ENCODE measurements at regions of chr15 and their contacts with region 1.

Region 1: DNA sequence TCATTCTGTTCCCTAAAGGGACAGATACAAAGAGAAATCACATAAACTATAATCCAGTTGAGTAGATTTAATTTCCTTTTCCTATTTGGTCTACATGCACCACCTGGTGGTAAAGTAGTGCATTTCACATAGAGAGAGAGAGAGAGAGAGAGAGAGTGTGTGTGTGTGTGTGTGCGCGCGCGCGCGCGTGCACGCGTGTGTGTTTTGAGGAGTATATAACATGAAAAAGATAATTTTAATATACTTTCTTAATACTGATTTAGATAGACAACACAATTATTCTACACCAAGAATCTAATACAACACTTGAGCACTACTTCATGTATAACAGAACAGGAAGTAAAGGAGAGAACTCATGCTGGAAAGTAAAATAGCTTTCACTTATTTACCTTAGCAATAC is 1.1 kb upstream of the FGF7 start:
- DNase-seq: peak; percentile 36 to 56 (median 50)
- H3K4me3 ChIP-seq: no peak overlapping the region
- H3K4me3 Mint-ChIP-seq: peak overlapping the region in 6 of 8 donors; percentile 3 to 69 (median 61)
- H3K27ac ChIP-seq: no peak overlapping the region
- H3K27ac Mint-ChIP-seq: peak overlapping the region in 3 of 7 donors; percentile 79 to 92 (median 90)
- H3K4me1 ChIP-seq: no peaks in the 10 kb centered on the region
- H3K4me1 Mint-ChIP-seq: peaks cover 3 to 4% (median 4%) of the 10 kb centered on the region in 4 donors
- H3K27me3 ChIP-seq: peaks cover 4% of the 10 kb centered on the region
- H3K27me3 Mint-ChIP-seq: peaks cover 3 to 6% of the 10 kb centered on the region in 2 donors

Region 2: DNA sequence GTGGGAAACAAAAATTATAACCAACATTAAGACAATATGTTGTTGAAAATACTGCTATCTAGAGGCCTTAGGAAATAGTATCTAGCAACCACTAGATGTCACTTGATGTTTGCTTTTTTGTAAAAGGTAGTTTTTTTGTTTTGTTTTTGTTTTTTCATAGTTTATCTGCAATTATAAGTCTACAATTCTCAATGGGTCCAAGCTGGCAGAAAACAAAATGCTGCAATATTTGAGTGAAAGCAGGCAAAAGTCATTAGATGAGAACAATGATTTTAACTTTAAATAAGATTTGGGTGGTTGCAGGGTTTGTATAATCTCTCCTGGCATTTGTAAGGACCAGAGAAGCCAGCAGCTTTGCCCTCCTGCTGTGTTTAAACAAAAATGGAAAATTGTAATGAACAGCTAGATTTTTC is 1063.8 kb before region 1 on chr15:
- CTCF ChIA-PET with region 1: no interaction called
- POLR2A ChIA-PET with region 1: no interaction called
- intact Hi-C with region 1: loop called (anchors 2 kb)
- DNase-seq: no peak
- H3K4me3 ChIP-seq: no peak overlapping the region
- H3K4me3 Mint-ChIP-seq: peak overlapping the region in 1 of 8 donors; percentile 29
- H3K27ac ChIP-seq: no peak overlapping the region
- H3K27ac Mint-ChIP-seq: peak overlapping the region in 1 of 7 donors; percentile 52
- H3K4me1 ChIP-seq: no peaks in the 10 kb centered on the region
- H3K4me1 Mint-ChIP-seq: peaks cover 6 to 11% (median 6%) of the 10 kb centered on the region in 4 donors
- H3K27me3 ChIP-seq: no peaks in the 10 kb centered on the region
- H3K27me3 Mint-ChIP-seq: peaks cover 0 to 1% of the 10 kb centered on the region in 2 donors

Region 3: GRCh38 chr15:49145651-49146609 is 276.1 kb before region 1 on chr15:
- CTCF ChIA-PET with region 1: interaction called, 3 read pairs
- POLR2A ChIA-PET with region 1: no interaction called
- intact Hi-C with region 1: loop called (anchors 2 kb)
- DNase-seq: peak in 4 of 5 donors; percentile 17 to 32 (median 24)
- H3K4me3 ChIP-seq: no peak overlapping the region
- H3K4me3 Mint-ChIP-seq: peak overlapping the region in 2 of 8 donors; percentile 9 to 24
- H3K27ac ChIP-seq: no peak overlapping the region
- H3K27ac Mint-ChIP-seq: peak overlapping the region in 3 of 7 donors; percentile 1 to 6 (median 4)
- H3K4me1 ChIP-seq: peaks cover 45% of the 10 kb centered on the region
- H3K4me1 Mint-ChIP-seq: peaks cover 35 to 53% (median 44%) of the 10 kb centered on the region in 4 donors
- H3K27me3 ChIP-seq: no peaks in the 10 kb centered on the region
- H3K27me3 Mint-ChIP-seq: no peaks in the 10 kb centered on the region

Region 4: DNA sequence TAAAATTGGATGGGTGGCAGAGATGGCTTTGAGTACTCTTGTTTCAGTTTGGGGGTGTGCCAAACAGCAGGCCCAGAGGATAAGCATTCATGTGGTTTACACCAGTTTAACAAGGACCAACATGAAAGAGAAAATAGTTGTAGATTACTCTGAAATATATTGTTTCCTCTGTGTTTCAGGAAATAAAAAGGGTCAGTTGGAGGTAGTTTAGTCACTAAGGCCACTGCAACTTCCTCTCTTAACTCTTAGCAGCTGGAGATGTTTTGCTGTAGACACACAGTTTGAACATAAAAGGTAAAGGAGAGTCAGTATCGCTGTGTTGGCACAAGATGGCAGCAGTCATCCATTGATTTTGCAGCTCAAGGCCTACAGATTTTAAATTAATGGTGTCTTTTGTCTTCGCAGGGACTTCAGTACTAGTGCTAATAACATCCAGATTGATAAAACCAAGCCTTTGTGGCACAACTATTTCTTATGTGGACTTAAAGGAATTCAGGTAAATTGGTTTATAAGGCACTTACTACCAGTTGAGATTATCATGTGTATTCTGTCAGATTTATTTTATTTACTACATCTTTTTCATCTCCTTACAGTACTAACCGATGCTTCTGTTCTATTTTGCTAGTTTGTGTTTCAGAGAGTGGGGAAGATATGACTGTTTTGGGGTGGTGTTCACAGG is 186.4 kb before region 1 on chr15:
- CTCF ChIA-PET with region 1: interaction called, 13 read pairs
- POLR2A ChIA-PET with region 1: no interaction called
- intact Hi-C with region 1: loop called (anchors 1 kb)
- DNase-seq: peak; percentile 36 to 46 (median 41)
- H3K4me3 ChIP-seq: no peak overlapping the region
- H3K4me3 Mint-ChIP-seq: no peak overlapping the region
- H3K27ac ChIP-seq: no peak overlapping the region
- H3K27ac Mint-ChIP-seq: peak overlapping the region in 6 of 7 donors; percentile 31 to 86 (median 70)
- H3K4me1 ChIP-seq: peaks cover 10% of the 10 kb centered on the region
- H3K4me1 Mint-ChIP-seq: peaks cover 10 to 16% (median 13%) of the 10 kb centered on the region in 4 donors
- H3K27me3 ChIP-seq: no peaks in the 10 kb centered on the region
- H3K27me3 Mint-ChIP-seq: no peaks in the 10 kb centered on the region

Region 5: DNA sequence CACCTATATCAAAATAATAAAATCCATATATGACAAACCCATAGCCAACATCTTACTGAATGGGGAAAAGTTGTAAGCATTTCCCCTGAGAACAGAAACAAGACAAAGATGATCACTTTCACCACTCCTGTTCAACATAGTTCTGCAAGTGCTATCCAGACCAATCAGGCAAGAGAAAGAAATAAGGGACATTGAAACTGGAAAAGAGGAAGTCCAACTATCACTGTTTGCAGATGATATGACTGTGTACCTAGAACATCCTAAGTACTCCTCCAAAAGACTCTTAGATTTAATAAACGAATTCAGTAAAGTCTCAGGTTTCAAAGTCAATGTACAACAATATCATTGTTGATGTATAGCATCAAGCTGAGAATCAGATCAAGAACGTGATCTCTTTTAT is 34.5 kb before region 1 on chr15:
- CTCF ChIA-PET with region 1: no interaction called
- POLR2A ChIA-PET with region 1: no interaction called
- intact Hi-C with region 1: no loop called
- DNase-seq: no peak
- H3K4me3 ChIP-seq: no peak overlapping the region
- H3K4me3 Mint-ChIP-seq: no peak overlapping the region
- H3K27ac ChIP-seq: no peak overlapping the region
- H3K27ac Mint-ChIP-seq: no peak overlapping the region
- H3K4me1 ChIP-seq: no peaks in the 10 kb centered on the region
- H3K4me1 Mint-ChIP-seq: no peaks in the 10 kb centered on the region
- H3K27me3 ChIP-seq: no peaks in the 10 kb centered on the region
- H3K27me3 Mint-ChIP-seq: peaks cover 4 to 8% of the 10 kb centered on the region in 2 donors